ENCODE measurements at regions of chr11 and their contacts with region 1.

Region 1: GRCh38 chr11:67373925-67374618 is 674 bp upstream of the CLCF1 start:
- DNase-seq: peak; percentile 98 to 99
- H3K4me3 ChIP-seq: peak overlapping the region; percentile 87
- H3K27ac ChIP-seq: peak overlapping the region; percentile 99
- H3K4me1 ChIP-seq: peaks cover 59% of the 10 kb centered on the region
- H3K27me3 ChIP-seq: no peaks in the 10 kb centered on the region
- CTCF ChIP-seq: peak; percentile 64

Region 2: GRCh38 chr11:66842896-66843775 is 530.9 kb before region 1 on chr11 and contains the start of gene RCE1:
- CTCF ChIA-PET with region 1: no interaction called
- POLR2A ChIA-PET with region 1: no interaction called
- intact Hi-C with region 1: loop called (anchors 10 kb)
- DNase-seq: peak; percentile 79 to 93
- H3K4me3 ChIP-seq: peak within 1 kb of the TSS; percentile 94
- H3K27ac ChIP-seq: peak within 1 kb of the TSS; percentile 67
- H3K4me1 ChIP-seq: peaks cover 52% of the 10 kb centered on the region
- H3K27me3 ChIP-seq: no peaks in the 10 kb centered on the region
- CTCF ChIP-seq: no peak
- total RNA-seq, gene RCE1: 42.1 and 42.9 TPM in 2 replicates

Region 3: GRCh38 chr11:67332081-67332691 is 41.9 kb before region 1 on chr11:
- CTCF ChIA-PET with region 1: interaction called, 3 read pairs
- POLR2A ChIA-PET with region 1: interaction called, 21 read pairs
- intact Hi-C with region 1: no loop called
- DNase-seq: peak in 1 of 2 experiments; percentile 45
- H3K4me3 ChIP-seq: no peak overlapping the region
- H3K27ac ChIP-seq: no peak overlapping the region
- H3K4me1 ChIP-seq: no peaks in the 10 kb centered on the region
- H3K27me3 ChIP-seq: no peaks in the 10 kb centered on the region
- CTCF ChIP-seq: no peak

Region 4: GRCh38 chr11:67345920-67346799 is 27.9 kb before region 1 on chr11:
- CTCF ChIA-PET with region 1: interaction called, 55 read pairs
- POLR2A ChIA-PET with region 1: interaction called, 5 read pairs
- intact Hi-C with region 1: no loop called
- DNase-seq: peak; percentile 76 to 100
- H3K4me3 ChIP-seq: peak overlapping the region; percentile 11; the same call in 1 of the 2 replicates
- H3K27ac ChIP-seq: peak overlapping the region; percentile 82
- H3K4me1 ChIP-seq: peaks cover 48% of the 10 kb centered on the region
- H3K27me3 ChIP-seq: no peaks in the 10 kb centered on the region
- CTCF ChIP-seq: peak; percentile 96

Region 5: GRCh38 chr11:67391304-67392132 is 17.4 kb after region 1 on chr11 and contains the start of gene RAD9A:
- CTCF ChIA-PET with region 1: no interaction called
- POLR2A ChIA-PET with region 1: interaction called, 26 read pairs
- intact Hi-C with region 1: no loop called
- DNase-seq: peak; percentile 82 to 94
- H3K4me3 ChIP-seq: peak within 1 kb of the TSS; percentile 89
- H3K27ac ChIP-seq: peak within 1 kb of the TSS; percentile 54
- H3K4me1 ChIP-seq: peaks cover 12% of the 10 kb centered on the region; the same call in 1 of the 2 replicates
- H3K27me3 ChIP-seq: no peaks in the 10 kb centered on the region
- CTCF ChIP-seq: no peak
- total RNA-seq, gene RAD9A: 62.8 and 79.8 TPM in 2 replicates

Region 6: GRCh38 chr11:67572747-67573419 is 198.8 kb after region 1 on chr11:
- CTCF ChIA-PET with region 1: interaction called, 10 read pairs
- POLR2A ChIA-PET with region 1: interaction called, 7 read pairs
- intact Hi-C with region 1: no loop called
- DNase-seq: peak; percentile 65 to 72
- H3K4me3 ChIP-seq: no peak overlapping the region
- H3K27ac ChIP-seq: peak overlapping the region; percentile 34
- H3K4me1 ChIP-seq: peaks cover 14% of the 10 kb centered on the region
- H3K27me3 ChIP-seq: no peaks in the 10 kb centered on the region
- CTCF ChIP-seq: peak; percentile 87

Measured in PC-9 (cell line).